Activated T-helper 2 cell treated with anti-CD3 and anti-CD28 coated beads, Interferon-gamma antibody, Interleukin-2, Interleukin-4, amounts not matched to agents 10 μg/mL and 5 μg/mL and 100 μg/mL, durations not matched to agents 14 hours and 24 hours and 36 hours (primary cell): ENCODE measurements at regions of chr1 and their contacts with region 1.

Region 1: GRCh38 chr1:234469376-234469775 is 9.6 kb downstream of the TARBP1 start:
- DNase-seq: no peak
- H3K4me3 Mint-ChIP-seq: no peak overlapping the region
- H3K27ac Mint-ChIP-seq: no peak overlapping the region
- H3K4me1 Mint-ChIP-seq: peaks cover 24% of the 10 kb centered on the region
- H3K27me3 Mint-ChIP-seq: no peaks in the 10 kb centered on the region

Region 2: GRCh38 chr1:234433563-234434285 is 35.7 kb before region 1 on chr1:
- intact Hi-C with region 1: loop called (anchors 5 kb)
- DNase-seq: no peak
- H3K4me3 Mint-ChIP-seq: no peak overlapping the region
- H3K27ac Mint-ChIP-seq: peak overlapping the region; percentile 5
- H3K4me1 Mint-ChIP-seq: peaks cover 33% of the 10 kb centered on the region
- H3K27me3 Mint-ChIP-seq: no peaks in the 10 kb centered on the region